Esophagus muscularis mucosa (tissue), 4 donors: ENCODE measurements at regions of chr2 and their contacts with region 1.

Region 1: GRCh38 chr2:137910641-137911040 is 53.6 kb upstream of the HNMT start:
- DNase-seq: no peak
- H3K4me3 ChIP-seq: no peak overlapping the region
- H3K27ac ChIP-seq: no peak overlapping the region
- H3K4me1 ChIP-seq: no peaks in the 10 kb centered on the region
- H3K27me3 ChIP-seq: no peaks in the 10 kb centered on the region
- CTCF ChIP-seq: peak; percentile 61 to 67 (median 65)
- EP300 ChIP-seq: no peak
- POLR2A ChIP-seq: no peak

Region 2: DNA sequence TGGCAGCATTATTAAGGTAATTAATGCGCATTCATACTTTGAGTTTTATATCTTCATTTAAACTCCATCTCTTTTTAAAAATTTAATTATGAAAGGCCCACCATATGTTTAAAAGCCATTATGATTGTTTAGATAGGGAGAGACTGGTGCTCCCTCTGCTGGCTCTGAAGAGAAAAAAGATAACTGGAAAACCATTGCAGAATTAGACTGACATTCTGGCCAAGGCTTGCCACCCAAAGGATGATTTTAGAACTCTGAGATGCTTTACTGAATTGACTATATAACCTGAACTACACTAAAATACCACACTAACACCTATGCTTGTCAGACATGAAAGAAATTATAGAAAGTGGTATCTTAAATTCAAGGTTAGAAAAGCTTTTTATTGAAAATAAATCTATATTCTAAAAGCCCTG is 463.4 kb after region 1 on chr2:
- intact Hi-C with region 1: loop called (anchors 10 kb)
- DNase-seq: no peak
- H3K4me3 ChIP-seq: no peak overlapping the region
- H3K27ac ChIP-seq: no peak overlapping the region
- H3K4me1 ChIP-seq: no peaks in the 10 kb centered on the region
- H3K27me3 ChIP-seq: no peaks in the 10 kb centered on the region
- CTCF ChIP-seq: peak; percentile 43 to 59 (median 54)
- EP300 ChIP-seq: no peak
- POLR2A ChIP-seq: no peak

Region 3: DNA sequence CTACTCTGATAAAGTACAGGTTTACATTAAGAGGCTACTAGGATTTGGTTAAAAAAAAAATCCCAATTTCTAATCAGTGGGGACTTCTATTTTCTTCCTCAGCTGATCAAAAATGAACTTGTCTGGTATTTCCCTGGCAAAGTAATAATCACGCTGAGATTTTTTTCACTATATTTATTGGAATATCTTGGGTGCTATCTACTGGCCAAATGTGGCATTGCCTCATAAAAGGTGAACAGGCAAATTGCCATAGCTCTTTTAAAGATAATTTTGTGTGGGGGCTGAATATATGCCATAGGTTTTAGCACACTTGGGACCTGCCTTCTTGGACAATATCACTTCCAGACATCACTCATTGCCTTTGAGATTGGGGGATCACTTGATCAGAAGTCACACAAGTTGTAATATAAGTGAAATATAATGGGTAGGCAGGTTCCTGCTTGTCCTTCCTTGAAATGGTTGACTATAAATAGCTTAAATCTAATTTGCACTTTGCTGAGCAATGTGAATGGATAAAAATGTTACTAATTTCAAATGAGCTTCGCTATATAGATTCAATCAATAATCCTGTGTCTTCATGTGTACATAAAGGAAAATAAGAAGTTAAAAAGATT is 876.5 kb after region 1 on chr2:
- intact Hi-C with region 1: loop called (anchors 10 kb)
- DNase-seq: no peak
- H3K4me3 ChIP-seq: no peak overlapping the region
- H3K27ac ChIP-seq: no peak overlapping the region
- H3K4me1 ChIP-seq: no peaks in the 10 kb centered on the region
- H3K27me3 ChIP-seq: no peaks in the 10 kb centered on the region
- CTCF ChIP-seq: peak; percentile 63 to 75 (median 66)
- EP300 ChIP-seq: no peak
- POLR2A ChIP-seq: no peak

Region 4: GRCh38 chr2:138827426-138828054 is 916.9 kb after region 1 on chr2:
- intact Hi-C with region 1: loop called (anchors 5 kb)
- DNase-seq: no peak
- H3K4me3 ChIP-seq: no peak overlapping the region
- H3K27ac ChIP-seq: no peak overlapping the region
- H3K4me1 ChIP-seq: no peaks in the 10 kb centered on the region
- H3K27me3 ChIP-seq: no peaks in the 10 kb centered on the region
- CTCF ChIP-seq: peak; percentile 68 to 74 (median 68)
- EP300 ChIP-seq: no peak
- POLR2A ChIP-seq: no peak